Endothelial cell of umbilical vein (primary cell): ENCODE measurements at regions of chr20 and their contacts with region 1.

Region 1: DNA sequence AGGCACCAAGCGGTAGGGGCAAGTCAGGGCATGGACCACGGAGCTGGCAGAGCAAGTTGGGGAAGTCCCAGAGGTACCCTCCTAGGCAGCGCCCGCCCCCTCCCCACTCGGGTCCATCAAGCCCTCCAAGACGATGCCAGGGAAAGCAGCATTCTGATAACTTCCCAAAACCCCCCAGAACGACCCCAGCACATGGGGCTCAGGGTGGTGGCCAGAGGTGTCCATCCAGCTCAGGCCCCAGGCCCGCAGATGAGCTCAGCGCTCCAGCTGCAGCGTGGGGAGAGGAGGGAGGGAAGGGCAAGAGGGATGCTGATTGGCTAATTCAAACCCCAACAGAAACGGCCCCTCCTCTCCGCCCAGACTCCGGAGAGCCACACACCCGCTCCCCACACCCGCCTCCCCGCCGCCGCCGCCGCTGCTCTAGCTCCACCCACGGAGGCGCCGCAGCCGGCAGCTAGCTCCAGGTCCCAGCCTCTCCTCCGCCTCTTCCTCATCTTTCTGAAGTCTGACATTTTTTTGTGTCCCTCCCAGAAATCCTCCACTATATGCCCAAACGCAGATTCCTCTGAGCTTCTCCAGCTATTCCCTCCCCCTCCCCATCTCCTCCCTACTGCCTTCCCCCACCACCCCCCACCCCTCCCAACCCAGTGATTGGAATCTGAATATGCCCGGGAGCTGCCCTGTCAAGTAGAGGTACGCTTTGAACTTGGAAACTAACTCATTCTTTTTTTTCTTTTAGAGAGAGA is 40.3 kb upstream of the TLDC2 start:
- DNase-seq: peak; percentile 94
- H3K4me3 ChIP-seq: no peak overlapping the region
- H3K27ac ChIP-seq: peak overlapping the region; percentile 43
- H3K4me1 ChIP-seq: peaks cover 38% of the 10 kb centered on the region
- H3K27me3 ChIP-seq: no peaks in the 10 kb centered on the region
- CTCF ChIP-seq: no peak
- POLR2A ChIP-seq: peak; percentile 69

Region 2: DNA sequence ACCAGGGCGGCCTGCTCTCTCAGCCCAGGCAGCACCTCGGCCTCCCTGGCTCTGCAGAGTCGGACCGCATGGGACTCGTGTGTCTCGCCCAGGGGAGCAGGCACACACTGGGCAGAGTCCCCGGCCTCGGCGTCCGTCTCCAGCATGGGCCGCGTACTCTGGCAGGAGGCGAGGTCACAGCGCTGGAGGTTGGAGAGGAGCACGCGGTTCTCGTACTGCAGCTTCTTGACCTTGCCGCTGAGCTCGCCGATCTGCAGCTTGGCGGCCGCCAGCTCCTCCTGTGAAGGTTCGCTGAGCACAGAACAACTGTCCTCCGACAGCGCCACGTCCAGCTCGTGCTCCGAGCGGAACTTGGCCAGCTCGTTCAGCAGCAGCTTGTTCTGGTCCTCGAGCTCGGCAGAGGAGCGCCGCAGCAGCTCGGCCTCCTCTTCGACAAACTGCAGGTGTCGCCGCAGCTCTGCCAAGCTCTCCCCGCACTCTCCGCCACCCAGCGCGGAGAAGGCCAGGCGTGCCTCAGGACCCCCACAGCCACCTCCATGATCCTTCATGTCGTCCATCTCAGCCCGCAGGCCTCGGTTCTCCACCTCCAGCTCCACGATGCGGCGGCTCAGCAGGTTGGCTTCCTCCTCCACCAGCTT is 20.1 kb before region 1 on chr20:
- CTCF ChIA-PET with region 1: interaction called, 19 read pairs
- POLR2A ChIA-PET with region 1: no interaction called
- dilution Hi-C with region 1: no loop called
- intact Hi-C with region 1: no loop called
- DNase-seq: no peak
- H3K4me3 ChIP-seq: no peak overlapping the region
- H3K27ac ChIP-seq: no peak overlapping the region
- H3K4me1 ChIP-seq: peaks cover 2% of the 10 kb centered on the region
- H3K27me3 ChIP-seq: no peaks in the 10 kb centered on the region
- CTCF ChIP-seq: no peak
- POLR2A ChIP-seq: no peak

Region 3: GRCh38 chr20:36847009-36847709 is 11.5 kb after region 1 on chr20:
- CTCF ChIA-PET with region 1: interaction called, 31 read pairs
- POLR2A ChIA-PET with region 1: interaction called, 3 read pairs
- dilution Hi-C with region 1: no loop called
- intact Hi-C with region 1: no loop called
- DNase-seq: no peak
- H3K4me3 ChIP-seq: no peak overlapping the region
- H3K27ac ChIP-seq: no peak overlapping the region
- H3K4me1 ChIP-seq: peaks cover 15% of the 10 kb centered on the region
- H3K27me3 ChIP-seq: no peaks in the 10 kb centered on the region
- CTCF ChIP-seq: no peak
- POLR2A ChIP-seq: no peak

Region 4: DNA sequence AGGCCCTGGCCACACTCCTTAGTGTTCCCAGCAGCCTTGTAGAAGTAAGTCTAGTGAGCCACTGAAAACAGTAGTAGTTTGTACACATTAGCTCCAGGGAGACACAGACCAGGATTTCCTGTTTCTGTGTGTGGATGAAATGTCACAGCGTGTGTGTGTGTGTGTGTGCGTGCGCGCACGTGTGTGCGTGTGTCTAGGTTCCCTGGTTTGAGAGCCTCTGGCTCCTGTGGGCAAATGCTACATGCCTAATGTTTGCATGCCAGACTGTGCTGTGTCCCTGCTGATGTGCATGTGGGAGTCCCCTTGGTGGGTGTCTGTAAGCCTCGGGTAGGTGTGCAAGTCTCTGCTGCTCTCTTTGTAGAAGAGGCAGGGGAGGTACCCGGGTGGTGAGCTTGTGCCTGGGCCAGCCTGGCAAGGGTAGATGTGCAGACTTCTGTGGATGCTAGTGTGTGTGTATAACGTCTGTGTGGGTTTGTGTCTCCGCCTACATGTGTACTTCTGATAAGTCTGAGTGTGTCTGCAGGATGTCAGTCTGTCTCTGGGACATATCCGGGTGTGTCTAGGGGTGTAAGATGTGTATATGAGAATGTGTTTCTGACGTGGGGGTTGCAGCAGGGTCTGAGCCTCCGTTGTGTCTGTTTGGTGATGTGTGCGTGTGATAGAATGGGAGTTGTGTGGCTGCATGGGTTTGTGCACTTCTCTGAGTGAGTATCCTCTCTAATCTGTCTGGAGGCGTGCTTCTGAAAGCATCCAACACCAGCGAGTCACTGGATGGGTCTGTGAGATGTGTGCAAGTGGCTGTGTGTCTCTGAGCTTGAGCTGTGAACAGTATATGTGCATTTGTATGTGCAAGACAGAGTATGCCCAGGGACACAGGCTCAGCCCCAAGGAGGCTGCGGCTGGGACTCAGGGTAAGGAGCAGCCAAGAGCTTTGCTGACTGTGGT is 21.3 kb after region 1 on chr20:
- CTCF ChIA-PET with region 1: interaction called, 59 read pairs
- POLR2A ChIA-PET with region 1: interaction called, 7 read pairs
- dilution Hi-C with region 1: no loop called
- intact Hi-C with region 1: loop called (anchors 2 kb)
- DNase-seq: peak; percentile 85
- H3K4me3 ChIP-seq: no peak overlapping the region
- H3K27ac ChIP-seq: peak overlapping the region; percentile 47
- H3K4me1 ChIP-seq: peaks cover 48% of the 10 kb centered on the region
- H3K27me3 ChIP-seq: no peaks in the 10 kb centered on the region
- CTCF ChIP-seq: no peak
- POLR2A ChIP-seq: no peak

Region 5: DNA sequence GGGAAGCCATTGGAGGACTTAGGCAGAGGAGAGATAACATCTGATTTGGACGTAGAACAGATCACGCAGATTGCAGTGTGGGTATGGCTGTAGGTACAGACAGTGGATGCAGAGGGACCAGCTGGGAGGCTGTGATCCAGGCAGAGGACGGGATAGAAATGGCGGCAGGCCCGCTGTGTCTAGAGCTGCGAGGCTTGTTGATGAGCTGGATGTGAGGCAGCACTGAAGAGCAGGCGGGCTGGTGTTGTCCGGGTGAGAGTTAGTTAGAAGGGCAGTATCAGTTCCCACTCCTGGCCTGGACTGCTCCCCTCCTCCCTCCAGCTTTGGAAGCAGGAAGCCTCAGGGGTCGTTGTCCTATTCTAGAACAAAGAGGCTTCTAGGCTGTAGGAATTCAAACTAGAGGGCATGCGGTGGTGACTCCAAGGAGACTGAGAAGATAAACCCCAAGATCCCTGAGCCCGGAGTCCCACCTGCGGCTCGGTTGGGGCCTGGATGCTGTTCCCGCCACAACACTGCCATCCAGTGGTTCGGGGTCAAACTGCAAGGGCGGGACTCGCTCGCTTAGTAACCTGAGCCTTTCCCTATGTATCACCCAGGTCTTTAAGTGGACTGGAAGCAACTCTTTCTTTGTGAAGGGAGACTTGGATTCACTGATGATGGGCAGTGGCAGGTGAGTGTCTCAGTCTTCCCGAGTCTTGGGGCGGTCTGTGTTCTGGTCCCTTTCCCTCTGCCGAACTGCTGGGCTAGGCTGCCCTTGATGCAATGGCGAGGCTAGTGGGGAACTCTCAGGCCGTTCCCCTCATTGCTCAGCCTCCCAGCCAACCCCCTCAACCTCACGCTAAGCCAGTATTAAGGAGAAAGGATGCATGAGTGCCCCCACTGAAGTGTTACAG is 51.5 kb after region 1 on chr20:
- CTCF ChIA-PET with region 1: interaction called, 6 read pairs
- POLR2A ChIA-PET with region 1: no interaction called
- dilution Hi-C with region 1: no loop called
- intact Hi-C with region 1: loop called (anchors 2 kb)
- DNase-seq: peak; percentile 77
- H3K4me3 ChIP-seq: no peak overlapping the region
- H3K27ac ChIP-seq: no peak overlapping the region
- H3K4me1 ChIP-seq: no peaks in the 10 kb centered on the region
- H3K27me3 ChIP-seq: no peaks in the 10 kb centered on the region
- CTCF ChIP-seq: peak; percentile 95 to 97
- POLR2A ChIP-seq: no peak